Activated CD4-positive, alpha-beta T cell treated with anti-CD3 and anti-CD28 coated beads, Interleukin-2, amount 10 ng/mL, durations not matched to agents 24 days and 14 days (primary cell): ENCODE measurements at regions of chr7 and their contacts with region 1.

Region 1: DNA sequence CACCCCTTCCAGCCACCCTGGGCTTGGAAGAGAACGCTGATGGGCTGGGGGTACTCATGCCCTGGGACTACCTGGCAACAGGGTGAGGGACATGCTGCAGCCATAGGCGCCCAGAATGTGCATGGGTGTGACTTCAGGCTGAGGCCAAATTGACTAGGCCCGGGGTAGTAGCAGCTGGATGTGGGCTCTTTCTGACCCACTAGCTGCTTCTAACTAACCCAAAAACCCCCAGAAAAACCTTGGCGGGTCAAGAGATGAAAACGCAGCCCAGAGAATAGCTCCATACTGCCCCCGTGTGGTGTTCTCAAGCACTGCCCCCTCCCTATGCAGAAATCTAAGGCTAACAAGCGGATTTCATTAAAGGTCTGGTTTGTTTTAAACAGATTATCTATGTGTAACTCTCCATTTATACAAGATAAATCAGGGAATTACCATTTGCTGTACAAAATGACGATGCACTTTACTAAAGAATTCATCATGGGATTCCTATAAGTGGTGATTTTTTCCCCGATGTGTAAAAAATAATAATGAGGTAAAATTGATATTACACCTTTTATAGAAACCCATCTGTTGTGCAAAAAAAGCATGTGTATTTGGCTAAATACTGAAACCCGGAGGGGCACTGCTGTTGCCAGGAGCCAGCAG is 4.2 kb downstream of the SMARCD3 start:
- DNase-seq: peak; percentile 89
- H3K4me3 Mint-ChIP-seq: peak overlapping the region; percentile 70
- H3K27ac Mint-ChIP-seq: no peak overlapping the region
- H3K4me1 Mint-ChIP-seq: peaks cover 34% of the 10 kb centered on the region
- H3K27me3 Mint-ChIP-seq: peaks cover 32% of the 10 kb centered on the region

Region 2: GRCh38 chr7:151123822-151124464 is 120.4 kb before region 1 on chr7:
- intact Hi-C with region 1: loop called (anchors 10 kb)
- DNase-seq: peak; percentile 95
- H3K4me3 Mint-ChIP-seq: no peak overlapping the region
- H3K27ac Mint-ChIP-seq: no peak overlapping the region
- H3K4me1 Mint-ChIP-seq: no peaks in the 10 kb centered on the region
- H3K27me3 Mint-ChIP-seq: no peaks in the 10 kb centered on the region

Region 3: GRCh38 chr7:151226875-151227782 is 17.2 kb before region 1 on chr7 and contains the start of gene ABCF2:
- intact Hi-C with region 1: loop called (anchors 2 kb)
- DNase-seq: peak; percentile 99
- H3K4me3 Mint-ChIP-seq: peak within 1 kb of the TSS; percentile 97
- H3K27ac Mint-ChIP-seq: peak within 1 kb of the TSS; percentile 96
- H3K4me1 Mint-ChIP-seq: peaks cover 36% of the 10 kb centered on the region
- H3K27me3 Mint-ChIP-seq: peaks cover 6% of the 10 kb centered on the region
- total RNA-seq, gene ABCF2: 84.6 and 90.3 TPM in 2 replicates

Region 4: DNA sequence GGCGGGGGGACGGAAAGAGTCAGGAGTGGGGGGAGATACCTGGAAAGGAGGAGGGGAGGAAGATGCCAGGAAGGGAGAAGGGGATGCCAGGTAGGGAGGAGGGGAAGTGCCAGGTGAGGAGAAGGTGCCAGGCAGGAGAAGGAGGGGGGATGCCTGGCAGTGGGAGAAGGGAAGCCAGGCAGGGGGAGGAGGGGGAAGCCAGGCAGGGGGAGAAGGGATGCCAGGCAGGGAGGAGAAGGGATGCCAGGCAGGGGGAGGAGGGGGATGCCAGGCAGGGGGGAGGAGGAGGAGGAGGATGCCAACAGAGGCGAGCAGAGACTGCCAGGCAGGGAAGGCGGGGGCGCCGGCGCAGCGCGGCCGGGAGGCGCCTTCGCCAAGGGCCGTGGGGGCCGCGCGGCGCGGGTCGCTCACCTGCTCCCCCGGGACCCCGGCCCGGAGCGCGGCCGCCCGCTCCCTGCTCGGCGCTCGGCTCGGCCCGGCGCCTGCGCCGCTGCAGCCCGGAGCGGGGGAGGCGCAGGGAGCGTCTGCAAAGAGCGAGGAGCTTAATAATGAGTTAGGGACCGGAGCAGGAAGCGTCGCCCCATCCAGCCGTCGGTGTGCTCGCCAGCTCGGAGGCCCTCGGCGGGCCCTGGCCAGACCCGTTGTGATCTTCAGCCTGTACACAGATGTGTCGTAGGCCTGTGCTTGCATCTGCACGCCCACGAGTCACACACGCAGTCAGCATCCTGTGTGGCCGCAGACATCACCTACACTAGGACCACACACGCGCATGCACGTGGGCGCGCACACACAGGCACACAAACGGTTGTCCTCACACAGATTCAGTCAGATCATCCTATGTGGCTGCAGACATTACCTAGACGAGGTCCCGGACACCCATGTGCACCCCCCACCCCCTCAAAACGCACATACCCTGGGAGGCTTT is 32.6 kb after region 1 on chr7:
- intact Hi-C with region 1: loop called (anchors 2 kb)
- DNase-seq: peak; percentile 87
- H3K4me3 Mint-ChIP-seq: peak overlapping the region; percentile 73
- H3K27ac Mint-ChIP-seq: peak overlapping the region; percentile 69
- H3K4me1 Mint-ChIP-seq: peaks cover 17% of the 10 kb centered on the region
- H3K27me3 Mint-ChIP-seq: peaks cover 19% of the 10 kb centered on the region

Region 5: DNA sequence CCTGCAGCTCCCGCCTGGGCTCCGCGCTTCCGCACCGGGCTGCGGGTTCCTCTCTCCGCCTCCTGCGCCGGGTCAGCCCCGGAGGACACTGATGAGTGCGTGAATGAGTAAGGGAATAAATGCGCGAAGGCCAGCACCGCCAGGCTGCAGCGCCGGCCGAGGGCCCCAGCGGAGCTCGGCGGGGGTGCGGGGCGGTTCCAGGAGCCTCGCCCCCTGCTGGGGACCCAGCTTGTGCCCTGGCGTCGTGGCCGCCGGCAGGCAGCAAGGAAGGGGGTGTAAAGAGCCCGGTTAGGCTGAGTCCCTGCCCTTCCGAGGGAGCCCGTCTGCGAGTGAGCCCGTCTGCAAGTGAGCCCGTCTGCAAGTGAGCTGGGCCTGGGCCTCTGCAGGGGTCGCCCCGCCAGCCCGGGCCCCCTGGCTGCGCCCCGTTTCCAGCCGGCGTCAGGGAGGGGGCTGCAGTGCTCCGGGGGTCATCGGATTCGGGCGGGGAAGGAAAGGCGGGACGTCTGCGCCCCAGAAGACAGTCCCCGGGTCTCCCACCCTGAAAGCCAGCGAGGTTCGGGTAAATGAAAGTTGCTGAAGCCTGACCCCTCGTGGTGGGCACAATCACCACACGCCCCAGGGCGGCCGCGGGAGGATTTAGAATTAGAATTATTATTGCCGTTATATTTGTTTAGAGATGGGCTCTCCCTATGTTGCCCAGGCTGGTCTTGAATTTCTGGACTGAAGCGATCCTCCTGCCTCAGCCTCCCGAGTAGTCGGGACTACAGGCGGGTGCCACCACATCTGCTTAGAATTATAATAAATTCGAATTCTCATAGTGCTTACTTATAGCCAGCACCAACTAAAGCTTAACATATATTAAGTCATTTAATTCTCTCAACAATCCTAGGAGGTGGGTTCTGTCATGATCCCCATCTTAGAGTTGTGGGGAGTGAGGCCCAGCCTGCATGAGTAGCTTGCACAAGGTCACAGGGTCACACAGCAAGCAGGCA is 204.2 kb after region 1 on chr7:
- intact Hi-C with region 1: loop called (anchors 10 kb)
- DNase-seq: peak; percentile 93
- H3K4me3 Mint-ChIP-seq: peak overlapping the region; percentile 65
- H3K27ac Mint-ChIP-seq: no peak overlapping the region
- H3K4me1 Mint-ChIP-seq: peaks cover 4% of the 10 kb centered on the region
- H3K27me3 Mint-ChIP-seq: peaks cover 18% of the 10 kb centered on the region

Region 6: DNA sequence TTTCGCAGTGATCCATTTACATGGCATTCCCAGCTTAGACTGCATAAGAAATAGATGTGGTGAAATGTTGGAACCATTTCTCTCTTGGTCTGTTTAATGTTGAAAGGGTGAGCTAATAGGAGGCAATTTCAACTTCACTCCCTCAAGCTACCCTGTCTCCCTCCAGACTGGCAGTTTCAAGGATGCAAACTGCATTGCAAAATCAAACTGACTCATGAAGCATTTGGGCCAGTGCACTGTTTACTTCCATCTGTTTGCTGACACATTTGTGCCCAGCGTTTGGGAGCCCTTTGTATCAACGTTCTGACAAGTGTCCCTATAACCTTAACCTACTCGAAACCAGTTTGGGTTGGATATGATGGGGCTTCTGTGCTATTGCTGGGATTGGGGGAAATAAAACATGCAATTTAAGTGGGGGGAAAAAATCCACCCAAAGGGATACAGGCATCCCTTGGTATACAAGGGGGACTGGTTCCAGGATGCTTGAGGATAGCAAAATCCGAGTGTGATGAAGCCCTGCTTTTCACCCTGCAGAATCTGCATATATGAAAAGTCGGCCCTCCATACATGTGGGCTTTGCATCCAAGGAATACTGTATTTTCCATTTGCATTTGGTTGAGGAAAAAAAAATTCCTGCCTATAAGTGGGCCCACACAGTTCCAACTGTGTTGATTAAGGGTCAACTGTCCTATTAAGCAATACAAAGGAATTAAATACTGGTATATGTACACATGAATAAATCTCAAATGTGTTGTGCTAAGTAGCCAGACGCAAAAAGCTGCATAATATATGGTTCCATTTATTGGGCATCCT is 259.8 kb after region 1 on chr7:
- intact Hi-C with region 1: no loop called
- DNase-seq: no peak
- H3K4me3 Mint-ChIP-seq: no peak overlapping the region
- H3K27ac Mint-ChIP-seq: no peak overlapping the region
- H3K4me1 Mint-ChIP-seq: peaks cover 25% of the 10 kb centered on the region
- H3K27me3 Mint-ChIP-seq: no peaks in the 10 kb centered on the region